PC-3 (cell line): ENCODE measurements at regions of chr3 and their contacts with region 1.

Region 1: DNA sequence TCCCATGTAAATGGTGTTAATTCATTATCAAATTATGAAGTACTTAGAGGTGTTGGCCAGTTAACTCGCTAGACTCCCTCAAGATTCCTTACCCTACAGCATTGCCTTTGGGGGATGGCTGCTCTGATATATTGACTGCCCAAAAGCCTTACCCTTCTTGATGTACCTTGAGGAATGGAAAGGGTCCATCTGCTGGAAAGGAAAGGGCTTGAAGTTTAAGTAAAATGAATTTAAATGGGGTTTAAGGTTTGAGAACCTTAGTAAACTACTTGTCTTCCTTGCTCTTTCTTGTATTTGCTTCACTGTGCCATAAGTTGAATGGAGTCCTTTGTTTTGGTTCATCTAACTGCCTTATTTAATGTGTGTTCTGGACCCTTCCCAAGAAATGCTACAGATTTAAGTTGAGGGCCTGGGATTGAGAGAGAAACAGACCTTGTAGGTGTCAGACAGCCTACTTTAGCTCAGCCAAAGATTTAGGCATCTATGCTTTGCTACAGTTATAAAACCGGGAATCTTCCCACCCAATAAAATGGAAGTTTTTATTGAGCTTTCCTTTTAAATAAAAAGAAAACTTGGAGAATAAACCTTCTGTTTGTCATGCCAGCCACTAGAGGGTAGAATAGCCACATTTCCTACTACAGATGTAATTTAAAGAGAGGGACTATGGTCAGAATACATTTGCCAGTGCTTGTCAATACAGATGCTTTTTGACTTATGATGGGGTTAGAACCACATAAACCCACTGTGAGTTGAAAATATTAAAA is 25.3 kb downstream of the CMSS1 start:
- DNase-seq: peak; percentile 78
- ATAC-seq: peak; percentile 86
- H3K4me3 ChIP-seq: no peak overlapping the region
- H3K27ac ChIP-seq: 0 out of 2 replicates have a peak overlapping the region, but pooled peaks have one; percentile 2
- H3K4me1 ChIP-seq: peaks cover 25% of the 10 kb centered on the region
- H3K27me3 ChIP-seq: no peaks in the 10 kb centered on the region
- CTCF ChIP-seq: peak; percentile 91

Region 2: DNA sequence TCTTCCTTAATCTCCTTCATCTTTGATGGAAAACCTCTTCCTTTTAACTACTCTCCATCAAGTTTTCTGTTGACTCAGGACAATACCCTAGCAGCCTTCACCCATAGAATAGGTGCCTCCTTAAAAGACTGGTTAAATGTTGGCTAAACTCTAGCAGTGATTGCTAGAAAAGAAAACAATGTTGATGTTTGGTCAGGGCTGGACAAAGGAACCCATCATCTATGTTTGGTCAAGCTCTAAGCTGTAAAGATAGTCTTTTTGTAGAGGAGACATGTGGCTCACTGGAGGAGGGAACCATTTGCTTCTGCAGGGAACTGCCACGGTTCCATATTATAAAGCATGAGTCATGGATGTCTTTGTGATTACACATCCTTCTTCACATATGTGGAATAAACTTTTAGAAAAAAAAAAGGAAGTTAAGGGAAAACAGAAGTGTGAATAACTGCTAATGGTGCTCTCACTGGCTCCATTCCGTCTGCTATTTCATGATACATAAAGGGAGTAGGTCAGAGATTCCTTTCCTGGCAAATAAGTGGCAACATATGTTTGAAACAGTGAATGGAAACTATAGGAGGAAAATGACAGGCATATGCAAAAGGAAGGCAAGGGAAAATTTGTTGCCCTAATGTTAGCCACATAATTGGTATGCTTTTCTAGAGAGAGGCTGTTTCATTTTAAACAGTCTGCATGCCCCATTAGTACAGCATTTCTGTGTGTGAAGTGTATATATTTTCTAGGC is 52.9 kb after region 1 on chr3:
- CTCF ChIA-PET with region 1: interaction called, 7 read pairs
- POLR2A ChIA-PET with region 1: no interaction called
- intact Hi-C with region 1: loop called (anchors 2 kb)
- DNase-seq: peak; percentile 94
- ATAC-seq: peak; percentile 98
- H3K4me3 ChIP-seq: no peak overlapping the region
- H3K27ac ChIP-seq: peak overlapping the region; percentile 87
- H3K4me1 ChIP-seq: peaks cover 35% of the 10 kb centered on the region
- H3K27me3 ChIP-seq: no peaks in the 10 kb centered on the region
- CTCF ChIP-seq: no peak

Region 3: GRCh38 chr3:100002599-100003350 is 159.8 kb after region 1 on chr3:
- CTCF ChIA-PET with region 1: interaction called, 8 read pairs
- POLR2A ChIA-PET with region 1: no interaction called
- intact Hi-C with region 1: loop called (anchors 1 kb)
- DNase-seq: peak; percentile 91
- ATAC-seq: peak; percentile 89
- H3K4me3 ChIP-seq: no peak overlapping the region
- H3K27ac ChIP-seq: 0 out of 2 replicates have a peak overlapping the region, but pooled peaks have one; percentile 9
- H3K4me1 ChIP-seq: peaks cover 39% of the 10 kb centered on the region
- H3K27me3 ChIP-seq: no peaks in the 10 kb centered on the region
- CTCF ChIP-seq: no peak

Region 4: DNA sequence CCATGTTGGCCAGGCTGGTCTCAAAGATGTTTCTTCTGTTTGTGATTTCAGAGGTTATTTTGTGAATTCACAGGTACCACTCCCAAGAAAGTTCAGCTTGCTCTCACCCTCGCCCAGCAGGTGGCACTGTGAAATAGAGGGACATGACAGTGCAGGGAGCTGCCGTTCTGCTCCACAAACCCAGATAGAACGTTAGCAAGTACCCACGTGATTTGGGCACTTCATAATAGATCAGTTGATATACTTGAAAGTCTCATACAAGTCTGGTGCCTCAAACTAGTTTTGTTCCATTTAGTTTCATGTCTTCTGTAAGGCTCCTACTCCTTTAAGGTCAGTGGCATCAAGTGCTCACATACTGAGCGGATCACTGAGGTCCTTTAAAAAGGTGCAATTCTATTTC is 225.8 kb after region 1 on chr3:
- CTCF ChIA-PET with region 1: interaction called, 8 read pairs
- POLR2A ChIA-PET with region 1: interaction called, 5 read pairs
- intact Hi-C with region 1: loop called (anchors 1 kb)
- DNase-seq: peak; percentile 90
- ATAC-seq: peak; percentile 79
- H3K4me3 ChIP-seq: no peak overlapping the region
- H3K27ac ChIP-seq: no peak overlapping the region
- H3K4me1 ChIP-seq: peaks cover 43% of the 10 kb centered on the region
- H3K27me3 ChIP-seq: no peaks in the 10 kb centered on the region
- CTCF ChIP-seq: peak; percentile 94

Region 5: GRCh38 chr3:100103558-100104441 is 260.8 kb after region 1 on chr3:
- CTCF ChIA-PET with region 1: interaction called, 5 read pairs
- POLR2A ChIA-PET with region 1: interaction called, 3 read pairs
- intact Hi-C with region 1: loop called (anchors 2 kb)
- DNase-seq: peak; percentile 78
- ATAC-seq: peak; percentile 39
- H3K4me3 ChIP-seq: no peak overlapping the region
- H3K27ac ChIP-seq: peak overlapping the region; percentile 88
- H3K4me1 ChIP-seq: peaks cover 69% of the 10 kb centered on the region
- H3K27me3 ChIP-seq: no peaks in the 10 kb centered on the region
- CTCF ChIP-seq: no peak

Region 6: GRCh38 chr3:100185847-100186246 is 342.8 kb after region 1 on chr3:
- CTCF ChIA-PET with region 1: interaction called, 10 read pairs
- POLR2A ChIA-PET with region 1: no interaction called
- intact Hi-C with region 1: no loop called
- DNase-seq: no peak
- ATAC-seq: no peak
- H3K4me3 ChIP-seq: no peak overlapping the region
- H3K27ac ChIP-seq: no peak overlapping the region
- H3K4me1 ChIP-seq: no peaks in the 10 kb centered on the region
- H3K27me3 ChIP-seq: no peaks in the 10 kb centered on the region
- CTCF ChIP-seq: no peak